Activated CD4-positive, alpha-beta T cell treated with anti-CD3 and anti-CD28 coated beads, Interleukin-2, amount 10 ng/mL, durations not matched to agents 24 days and 14 days (primary cell): ENCODE measurements at regions of chr6 and their contacts with region 1.

Region 1: GRCh38 chr6:1596088-1596852 is 13.4 kb upstream of the FOXC1 start:
- DNase-seq: peak; percentile 89
- H3K4me3 Mint-ChIP-seq: no peak overlapping the region
- H3K27ac Mint-ChIP-seq: no peak overlapping the region
- H3K4me1 Mint-ChIP-seq: peaks cover 3% of the 10 kb centered on the region
- H3K27me3 Mint-ChIP-seq: peaks cover 55% of the 10 kb centered on the region

Region 2: DNA sequence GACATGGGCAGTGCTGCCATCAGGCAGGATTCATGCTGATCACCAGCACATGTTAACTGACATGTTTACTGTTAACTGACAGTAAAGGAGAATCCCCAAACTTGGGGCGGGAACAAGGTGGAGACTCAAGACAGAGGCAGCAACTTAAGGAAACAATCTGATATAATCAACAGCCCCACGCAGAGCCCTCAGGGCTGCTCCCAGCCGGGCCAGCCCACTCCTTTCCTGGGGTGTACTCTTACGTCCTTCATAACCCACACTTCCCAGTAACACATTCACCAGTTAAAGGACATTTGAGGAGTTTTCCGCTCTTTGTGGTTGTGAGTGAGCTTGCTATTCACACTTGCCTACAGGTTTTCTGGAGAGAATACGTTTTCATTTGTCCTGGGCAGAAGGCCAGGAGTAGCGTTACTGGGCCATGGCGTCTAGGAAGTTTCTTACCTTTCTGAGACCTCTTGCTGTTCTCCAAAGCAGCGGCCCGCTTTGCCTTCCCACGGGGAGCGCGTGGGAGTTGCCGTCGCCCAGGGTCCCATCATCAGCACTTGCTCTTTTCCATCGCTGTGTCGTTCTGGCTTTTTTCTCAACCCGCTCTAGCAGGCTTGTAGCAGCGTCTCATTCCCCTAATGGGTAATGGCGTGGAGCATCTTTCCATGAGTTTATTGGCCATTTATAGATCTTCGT is 150.5 kb before region 1 on chr6:
- intact Hi-C with region 1: no loop called
- DNase-seq: no peak
- H3K4me3 Mint-ChIP-seq: no peak overlapping the region
- H3K27ac Mint-ChIP-seq: no peak overlapping the region
- H3K4me1 Mint-ChIP-seq: no peaks in the 10 kb centered on the region
- H3K27me3 Mint-ChIP-seq: peaks cover 3% of the 10 kb centered on the region

Region 3: GRCh38 chr6:2196079-2196679 is 599.9 kb after region 1 on chr6:
- intact Hi-C with region 1: loop called (anchors 1 kb)
- DNase-seq: peak; percentile 80
- H3K4me3 Mint-ChIP-seq: no peak overlapping the region
- H3K27ac Mint-ChIP-seq: no peak overlapping the region
- H3K4me1 Mint-ChIP-seq: peaks cover 2% of the 10 kb centered on the region
- H3K27me3 Mint-ChIP-seq: peaks cover 3% of the 10 kb centered on the region

Region 4: GRCh38 chr6:2353412-2354137 is 757.3 kb after region 1 on chr6:
- intact Hi-C with region 1: loop called (anchors 2 kb)
- DNase-seq: peak; percentile 84
- H3K4me3 Mint-ChIP-seq: no peak overlapping the region
- H3K27ac Mint-ChIP-seq: no peak overlapping the region
- H3K4me1 Mint-ChIP-seq: no peaks in the 10 kb centered on the region
- H3K27me3 Mint-ChIP-seq: peaks cover 9% of the 10 kb centered on the region

Region 5: DNA sequence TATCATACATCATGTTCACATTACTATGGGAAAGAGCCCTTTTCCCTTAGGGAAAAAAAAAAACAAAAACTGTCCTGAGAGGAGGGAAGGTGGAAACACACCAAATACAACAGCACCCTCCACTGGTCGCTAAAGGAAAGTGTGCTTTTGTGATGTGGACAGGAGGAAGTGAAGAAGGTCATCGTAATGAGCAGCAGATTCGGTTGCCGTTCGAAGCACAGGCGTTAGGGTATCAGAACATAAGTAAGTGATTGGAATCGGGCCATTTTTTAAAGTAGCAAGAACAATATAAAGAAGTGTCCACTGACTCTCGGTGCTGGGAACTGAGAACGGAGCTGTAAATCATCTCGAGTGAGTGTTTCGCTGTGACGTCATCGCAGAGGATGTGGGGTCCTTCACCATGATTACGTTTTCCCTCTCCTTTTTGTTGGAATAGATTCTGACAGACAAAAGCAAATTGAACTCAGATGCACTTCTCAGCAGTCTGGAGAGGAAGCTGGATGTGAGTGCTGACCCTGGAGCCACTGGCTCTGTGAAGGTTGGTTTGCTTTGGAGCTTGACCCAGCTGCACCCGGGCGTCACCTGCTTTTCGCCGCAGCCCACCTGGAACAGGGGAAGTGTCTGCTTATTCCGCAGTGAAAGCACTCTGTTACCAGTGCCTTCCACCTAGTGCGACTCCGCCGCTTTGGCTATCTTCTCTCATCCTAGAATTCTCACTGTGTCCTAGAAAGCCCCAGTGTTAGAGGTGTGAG is 852.7 kb after region 1 on chr6:
- intact Hi-C with region 1: loop called (anchors 2 kb)
- DNase-seq: peak; percentile 70
- H3K4me3 Mint-ChIP-seq: peak overlapping the region; percentile 31
- H3K27ac Mint-ChIP-seq: no peak overlapping the region
- H3K4me1 Mint-ChIP-seq: peaks cover 3% of the 10 kb centered on the region
- H3K27me3 Mint-ChIP-seq: peaks cover 18% of the 10 kb centered on the region

Region 6: GRCh38 chr6:2749969-2750600 is 1153.8 kb after region 1 on chr6:
- intact Hi-C with region 1: loop called (anchors 1 kb)
- DNase-seq: peak; percentile 91
- H3K4me3 Mint-ChIP-seq: no peak overlapping the region
- H3K27ac Mint-ChIP-seq: no peak overlapping the region
- H3K4me1 Mint-ChIP-seq: peaks cover 4% of the 10 kb centered on the region
- H3K27me3 Mint-ChIP-seq: peaks cover 63% of the 10 kb centered on the region